WTC11 (cell line): ENCODE measurements at regions of chr17 and their contacts with region 1.

Region 1: GRCh38 chr17:74361230-74362068 is at the start of gene BTBD17:
- DNase-seq: peak; percentile 87
- ATAC-seq: peak; percentile 83
- H3K4me3 Mint-ChIP-seq: peak within 1 kb of the TSS; percentile 59
- H3K27ac Mint-ChIP-seq: no peak within 1 kb of the TSS; the same call in 1 of the 2 replicates
- H3K4me1 Mint-ChIP-seq: peaks cover 31% of the 10 kb centered on the region
- H3K27me3 Mint-ChIP-seq: peaks cover 14% of the 10 kb centered on the region
- CTCF ChIP-seq: peak; percentile 78
- total RNA-seq, gene BTBD17: 0.94 to 2.1 TPM (median 2.0 TPM) in 3 replicates

Region 2: DNA sequence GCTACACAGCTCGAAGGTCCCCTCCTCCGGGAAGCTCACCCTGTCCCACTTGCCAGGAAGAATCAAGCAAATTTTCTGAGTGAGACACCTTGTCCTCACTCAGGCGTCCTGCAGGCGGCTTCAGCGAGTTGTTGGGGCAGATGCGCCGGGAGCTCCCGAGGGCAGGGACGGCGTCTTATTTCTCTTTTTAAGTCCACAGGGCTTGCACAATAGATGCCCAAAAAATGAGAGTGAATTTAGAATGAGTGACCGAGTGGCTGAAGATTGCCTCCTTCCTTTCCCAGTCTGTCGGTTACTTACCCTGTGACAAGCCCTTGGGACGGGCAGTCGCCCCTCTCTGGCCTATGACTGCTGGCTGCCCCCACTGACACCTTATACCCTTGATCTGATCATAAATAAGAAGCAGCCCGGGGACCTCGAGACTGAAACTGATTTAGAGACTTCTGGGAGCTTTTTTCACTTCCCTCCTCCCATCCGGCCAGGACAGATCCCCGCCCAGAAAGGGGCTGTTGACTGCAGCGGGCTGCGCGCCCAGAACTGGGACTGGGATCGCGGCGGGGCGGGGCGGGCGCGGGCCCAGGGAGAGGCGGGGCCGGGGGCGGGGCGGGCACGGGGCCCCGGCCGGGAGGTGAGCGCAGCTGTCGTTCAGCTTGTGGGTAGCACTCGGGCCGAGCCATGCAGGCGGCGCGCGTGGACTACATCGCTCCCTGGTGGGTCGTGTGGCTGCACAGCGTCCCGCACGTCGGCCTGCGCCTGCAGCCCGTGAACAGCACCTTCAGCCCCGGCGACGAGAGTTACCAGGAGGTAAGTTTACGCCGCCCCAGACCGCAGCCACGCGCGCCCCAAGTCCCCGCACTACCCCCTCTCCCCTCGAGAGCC is 148.3 kb before region 1 on chr17 and contains the start of gene TTYH2:
- CTCF ChIA-PET with region 1: interaction called, 14 read pairs
- POLR2A ChIA-PET with region 1: no interaction called
- DNase-seq: peak; percentile 74
- ATAC-seq: peak; percentile 34
- H3K4me3 Mint-ChIP-seq: peak within 1 kb of the TSS; percentile 93
- H3K27ac Mint-ChIP-seq: peak within 1 kb of the TSS; percentile 65
- H3K4me1 Mint-ChIP-seq: peaks cover 45% of the 10 kb centered on the region
- H3K27me3 Mint-ChIP-seq: peaks cover 37% of the 10 kb centered on the region
- CTCF ChIP-seq: no peak
- total RNA-seq, gene TTYH2: 3.5 to 5.1 TPM (median 4.5 TPM) in 3 replicates

Region 3: DNA sequence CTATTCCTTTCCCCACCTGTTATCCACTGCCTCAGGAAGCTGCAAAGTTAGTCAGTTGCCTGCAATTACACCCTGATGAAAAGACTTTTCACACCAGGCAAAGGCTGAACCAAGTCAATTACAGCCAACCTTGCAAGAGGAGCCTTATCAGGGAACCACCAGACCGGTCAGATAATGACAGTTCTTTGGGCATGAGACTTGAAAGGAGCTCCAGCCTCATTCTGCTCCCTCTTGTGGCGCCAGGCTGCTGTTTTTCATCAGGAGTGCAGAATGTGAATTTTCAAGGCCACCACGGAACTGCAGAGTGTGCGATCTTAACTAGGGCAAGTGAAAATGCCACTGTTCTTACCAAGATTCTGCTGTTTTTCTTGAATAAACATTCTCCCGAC is 64.9 kb before region 1 on chr17:
- CTCF ChIA-PET with region 1: interaction called, 23 read pairs
- POLR2A ChIA-PET with region 1: no interaction called
- DNase-seq: peak; percentile 56
- ATAC-seq: peak; percentile 74
- H3K4me3 Mint-ChIP-seq: no peak overlapping the region
- H3K27ac Mint-ChIP-seq: no peak overlapping the region
- H3K4me1 Mint-ChIP-seq: no peaks in the 10 kb centered on the region
- H3K27me3 Mint-ChIP-seq: peaks cover 2% of the 10 kb centered on the region; the same call in 1 of the 2 replicates
- CTCF ChIP-seq: no peak; the same call in 1 of the 2 replicates

Region 4: GRCh38 chr17:74373838-74374606 is 12.6 kb after region 1 on chr17:
- CTCF ChIA-PET with region 1: interaction called, 138 read pairs
- POLR2A ChIA-PET with region 1: interaction called, 5 read pairs
- DNase-seq: no peak
- ATAC-seq: no peak
- H3K4me3 Mint-ChIP-seq: no peak overlapping the region
- H3K27ac Mint-ChIP-seq: no peak overlapping the region; the same call in 1 of the 2 replicates
- H3K4me1 Mint-ChIP-seq: peaks cover 6% of the 10 kb centered on the region
- H3K27me3 Mint-ChIP-seq: peaks cover 2% of the 10 kb centered on the region; the same call in 1 of the 2 replicates
- CTCF ChIP-seq: no peak

Region 5: DNA sequence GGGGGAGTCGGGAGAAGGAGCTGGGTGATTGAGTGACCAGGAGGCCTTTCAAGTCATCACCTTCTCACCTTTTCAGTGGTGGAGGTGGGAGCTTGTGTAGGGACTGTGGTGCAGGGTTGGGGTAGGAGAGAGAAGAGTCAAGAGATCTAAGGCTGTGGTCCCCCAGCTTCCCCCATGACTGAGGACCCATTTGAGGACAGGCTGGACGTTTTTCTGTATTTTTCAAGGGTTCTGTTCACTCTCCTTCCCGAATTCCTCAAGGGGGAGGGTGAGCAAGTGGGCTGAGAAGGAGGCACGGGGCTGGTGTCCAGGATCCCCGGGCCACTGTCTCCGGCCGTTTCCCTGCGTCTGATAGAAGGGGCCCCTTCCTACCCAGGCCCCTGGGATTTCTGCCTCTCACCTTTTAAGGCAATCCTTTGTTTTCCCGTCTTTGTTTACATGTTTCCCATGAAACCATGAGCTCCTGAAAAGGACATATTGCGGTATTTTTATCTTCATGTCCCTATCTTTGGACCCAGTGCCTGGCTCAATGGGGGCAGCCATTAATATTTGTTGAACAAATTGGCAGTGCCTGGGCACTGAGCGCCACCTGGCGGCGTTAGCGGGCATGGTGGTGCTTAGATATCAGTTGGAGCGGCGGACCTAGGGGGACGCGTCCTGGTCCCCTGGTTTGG is 95.8 kb after region 1 on chr17:
- CTCF ChIA-PET with region 1: interaction called, 35 read pairs
- POLR2A ChIA-PET with region 1: interaction called, 4 read pairs
- DNase-seq: peak; percentile 86
- ATAC-seq: peak; percentile 13
- H3K4me3 Mint-ChIP-seq: no peak overlapping the region
- H3K27ac Mint-ChIP-seq: no peak overlapping the region
- H3K4me1 Mint-ChIP-seq: peaks cover 36% of the 10 kb centered on the region
- H3K27me3 Mint-ChIP-seq: peaks cover 21% of the 10 kb centered on the region
- CTCF ChIP-seq: peak; percentile 89

Region 6: GRCh38 chr17:74513987-74514631 is 152.7 kb after region 1 on chr17:
- CTCF ChIA-PET with region 1: no interaction called
- POLR2A ChIA-PET with region 1: no interaction called
- DNase-seq: no peak
- ATAC-seq: no peak
- H3K4me3 Mint-ChIP-seq: no peak overlapping the region
- H3K27ac Mint-ChIP-seq: peak overlapping the region; percentile 94
- H3K4me1 Mint-ChIP-seq: no peaks in the 10 kb centered on the region
- H3K27me3 Mint-ChIP-seq: peaks cover 30% of the 10 kb centered on the region
- CTCF ChIP-seq: no peak

Region 7: DNA sequence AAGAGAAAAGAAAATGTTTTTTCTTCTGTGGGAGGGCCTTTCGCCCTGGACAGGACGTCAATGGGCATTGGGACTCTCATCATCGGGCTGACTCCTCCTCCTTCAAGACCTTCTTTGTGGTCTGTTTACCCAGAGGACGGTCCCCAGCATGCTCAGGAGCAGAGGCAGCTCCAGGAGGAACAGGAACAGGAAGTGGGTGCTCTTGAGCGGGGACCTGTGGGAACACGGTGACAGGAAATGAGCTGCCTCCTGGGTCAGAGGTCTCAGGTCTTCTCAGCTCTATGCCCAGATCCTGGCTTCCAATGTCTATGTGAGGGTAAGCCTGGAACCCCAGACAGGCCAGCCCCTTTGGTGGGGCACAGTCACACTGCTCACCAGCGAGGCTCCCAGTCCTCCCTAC is 218.5 kb after region 1 on chr17:
- CTCF ChIA-PET with region 1: no interaction called
- POLR2A ChIA-PET with region 1: no interaction called
- DNase-seq: no peak
- ATAC-seq: no peak
- H3K4me3 Mint-ChIP-seq: no peak overlapping the region
- H3K27ac Mint-ChIP-seq: no peak overlapping the region
- H3K4me1 Mint-ChIP-seq: peaks cover 6% of the 10 kb centered on the region
- H3K27me3 Mint-ChIP-seq: peaks cover 10% of the 10 kb centered on the region
- CTCF ChIP-seq: no peak